Activated T-helper 2 cell treated with anti-CD3 and anti-CD28 coated beads, Interferon-gamma antibody, Interleukin-2, Interleukin-4, amounts not matched to agents 10 μg/mL and 5 μg/mL and 100 μg/mL, durations not matched to agents 14 hours and 24 hours and 36 hours (primary cell): ENCODE measurements at regions of chr2 and their contacts with region 1.

Region 1: DNA sequence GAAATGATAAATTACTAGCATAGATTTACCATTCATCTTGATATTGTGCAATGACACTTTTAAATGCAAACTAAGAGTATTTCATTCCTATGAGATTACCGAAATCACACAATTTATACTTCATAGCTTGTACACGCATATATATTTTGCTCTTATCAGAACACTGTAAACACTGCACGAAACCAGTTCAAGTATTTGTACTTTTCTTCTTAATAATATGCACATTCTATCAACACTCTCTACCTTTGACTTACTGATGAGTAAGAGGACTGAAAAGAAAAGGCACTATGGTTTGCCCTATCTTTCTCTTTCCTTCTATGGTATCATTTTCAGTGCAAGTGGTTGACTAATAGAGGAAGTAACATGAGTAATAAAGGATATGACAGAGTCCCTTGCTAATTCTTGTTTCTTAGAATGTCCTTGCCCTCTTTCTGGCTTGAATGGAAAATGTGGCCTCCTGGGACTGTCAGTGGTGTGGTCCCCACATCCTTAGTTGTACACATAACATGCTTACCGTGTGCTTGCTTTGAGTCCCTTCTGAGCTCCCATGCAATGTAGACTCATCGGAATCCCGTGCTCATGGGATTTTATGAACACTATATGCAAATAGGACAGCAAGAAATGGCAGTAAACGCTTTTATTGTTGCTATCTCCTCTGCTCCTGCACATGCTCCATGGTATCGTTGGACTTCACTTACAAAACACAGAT is 363.5 kb upstream of the TNP1 start:
- DNase-seq: peak; percentile 56
- H3K4me3 Mint-ChIP-seq: peak overlapping the region; percentile 19
- H3K27ac Mint-ChIP-seq: peak overlapping the region; percentile 58
- H3K4me1 Mint-ChIP-seq: peaks cover 49% of the 10 kb centered on the region
- H3K27me3 Mint-ChIP-seq: peaks cover 4% of the 10 kb centered on the region

Region 2: GRCh38 chr2:216350214-216350789 is 873.1 kb before region 1 on chr2:
- intact Hi-C with region 1: loop called (anchors 5 kb)
- DNase-seq: peak; percentile 24
- H3K4me3 Mint-ChIP-seq: no peak overlapping the region
- H3K27ac Mint-ChIP-seq: peak overlapping the region; percentile 67
- H3K4me1 Mint-ChIP-seq: peaks cover 68% of the 10 kb centered on the region
- H3K27me3 Mint-ChIP-seq: no peaks in the 10 kb centered on the region

Region 3: GRCh38 chr2:216692636-216693413 is 530.6 kb before region 1 on chr2:
- intact Hi-C with region 1: loop called (anchors 2 kb)
- DNase-seq: peak; percentile 65
- H3K4me3 Mint-ChIP-seq: peak overlapping the region; percentile 83
- H3K27ac Mint-ChIP-seq: peak overlapping the region; percentile 68
- H3K4me1 Mint-ChIP-seq: peaks cover 25% of the 10 kb centered on the region
- H3K27me3 Mint-ChIP-seq: peaks cover 66% of the 10 kb centered on the region

Region 4: GRCh38 chr2:217090024-217090473 is 133.3 kb before region 1 on chr2:
- intact Hi-C with region 1: loop called (anchors 1 kb)
- DNase-seq: no peak
- H3K4me3 Mint-ChIP-seq: peak overlapping the region; percentile 40
- H3K27ac Mint-ChIP-seq: peak overlapping the region; percentile 26
- H3K4me1 Mint-ChIP-seq: peaks cover 54% of the 10 kb centered on the region
- H3K27me3 Mint-ChIP-seq: peaks cover 9% of the 10 kb centered on the region

Region 5: DNA sequence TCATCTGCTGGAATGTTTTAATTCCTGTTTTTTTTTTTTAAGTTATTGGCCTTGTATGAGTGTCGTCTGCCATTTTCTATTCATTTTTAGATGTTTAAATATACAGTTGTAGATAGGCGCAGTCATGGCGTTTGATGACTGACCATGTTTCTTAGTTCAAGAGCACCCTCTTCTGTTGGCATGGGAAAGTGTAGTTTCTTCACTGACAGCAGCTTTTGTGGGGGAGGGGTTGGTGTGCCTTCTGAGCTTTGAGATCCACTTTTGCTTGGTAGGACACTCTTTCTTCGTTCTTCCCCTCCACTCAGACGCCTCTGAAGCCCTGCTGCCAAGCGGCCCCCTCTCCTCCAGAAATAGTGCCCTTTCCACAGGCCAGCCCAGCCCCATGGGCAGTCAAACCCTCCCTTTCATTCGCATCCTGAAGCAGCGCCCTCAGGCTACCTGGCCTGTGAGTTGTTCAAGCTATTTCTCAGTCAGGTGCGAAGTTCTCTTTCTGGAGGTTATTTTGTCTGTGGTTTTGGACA is 287.5 kb after region 1 on chr2:
- intact Hi-C with region 1: loop called (anchors 5 kb)
- DNase-seq: peak; percentile 16
- H3K4me3 Mint-ChIP-seq: no peak overlapping the region
- H3K27ac Mint-ChIP-seq: no peak overlapping the region
- H3K4me1 Mint-ChIP-seq: peaks cover 6% of the 10 kb centered on the region
- H3K27me3 Mint-ChIP-seq: peaks cover 6% of the 10 kb centered on the region